ENCODE measurements at regions of chr1 and their contacts with region 1.

Region 1: GRCh38 chr1:56387071-56387740 is 192.2 kb downstream of the PLPP3 start:
- DNase-seq: peak; percentile 87
- ATAC-seq: peak; percentile 81
- H3K4me3 ChIP-seq: no peak overlapping the region
- H3K27ac ChIP-seq: peak overlapping the region; percentile 85
- H3K4me1 ChIP-seq: peaks cover 61% of the 10 kb centered on the region
- H3K27me3 ChIP-seq: no peaks in the 10 kb centered on the region
- CTCF ChIP-seq: no peak

Region 2: GRCh38 chr1:55347866-55348265 is 1039.3 kb before region 1 on chr1:
- CTCF ChIA-PET with region 1: no interaction called
- POLR2A ChIA-PET with region 1: no interaction called
- intact Hi-C with region 1: no loop called
- DNase-seq: no peak
- ATAC-seq: no peak
- H3K4me3 ChIP-seq: no peak overlapping the region
- H3K27ac ChIP-seq: no peak overlapping the region
- H3K4me1 ChIP-seq: no peaks in the 10 kb centered on the region
- H3K27me3 ChIP-seq: no peaks in the 10 kb centered on the region
- CTCF ChIP-seq: no peak

Region 3: GRCh38 chr1:56414728-56415224 is 27.6 kb after region 1 on chr1:
- CTCF ChIA-PET with region 1: interaction called, 4 read pairs
- POLR2A ChIA-PET with region 1: no interaction called
- intact Hi-C with region 1: loop called (anchors 1 kb)
- DNase-seq: peak; percentile 95
- ATAC-seq: peak; percentile 96
- H3K4me3 ChIP-seq: peak overlapping the region; percentile 7; the same call in 1 of the 2 replicates
- H3K27ac ChIP-seq: peak overlapping the region; percentile 68
- H3K4me1 ChIP-seq: peaks cover 34% of the 10 kb centered on the region
- H3K27me3 ChIP-seq: no peaks in the 10 kb centered on the region
- CTCF ChIP-seq: no peak